ENCODE measurements at regions of chr10 and their contacts with region 1.

Region 1: DNA sequence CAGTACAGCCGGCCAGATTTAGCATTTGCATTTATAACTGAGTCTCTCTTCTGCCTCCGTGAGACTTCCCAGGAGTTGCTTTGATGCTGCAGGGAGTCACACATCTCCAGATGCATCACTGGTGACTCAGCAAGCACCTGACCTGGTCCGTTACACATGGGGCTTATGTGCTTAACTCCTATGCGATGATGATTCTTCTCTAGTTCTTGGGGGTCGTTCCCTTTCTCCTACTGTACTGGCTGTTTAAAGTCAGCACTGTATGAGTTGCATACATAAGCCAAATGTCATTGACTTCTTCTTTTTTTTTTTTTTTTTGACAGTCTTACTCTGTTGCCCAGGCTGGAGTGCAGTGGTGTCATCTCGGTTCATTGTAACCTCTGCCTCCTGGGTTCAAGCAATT is 13.0 kb upstream of the AKR1E2 start:
- DNase-seq: no peak
- ATAC-seq: peak; percentile 35
- H3K4me3 ChIP-seq: no peak overlapping the region
- H3K4me3 Mint-ChIP-seq: no peak overlapping the region
- H3K27ac ChIP-seq: no peak overlapping the region
- H3K27ac Mint-ChIP-seq: no peak overlapping the region
- H3K4me1 ChIP-seq: no peaks in the 10 kb centered on the region
- H3K4me1 Mint-ChIP-seq: peaks cover 0 to 4% (median 0%) of the 10 kb centered on the region in 7 donors
- H3K27me3 ChIP-seq: no peaks in the 10 kb centered on the region
- H3K27me3 Mint-ChIP-seq: peaks cover 0 to 14% (median 8%) of the 10 kb centered on the region in 5 donors

Region 2: GRCh38 chr10:4825851-4826665 is 13.0 kb after region 1 on chr10 and contains the start of gene AKR1E2:
- CTCF ChIA-PET with region 1: interaction called, 4 read pairs
- POLR2A ChIA-PET with region 1: interaction called, 3 read pairs
- intact Hi-C with region 1: loop called in 1 of 2 experiments (anchors 1 kb)
- DNase-seq: peak; percentile 56 to 91 (median 83)
- ATAC-seq: peak; percentile 93
- H3K4me3 ChIP-seq: peak within 1 kb of the TSS; percentile 10
- H3K4me3 Mint-ChIP-seq: peak within 1 kb of the TSS; percentile 61 to 89 (median 84)
- H3K27ac ChIP-seq: peak within 1 kb of the TSS; percentile 72
- H3K27ac Mint-ChIP-seq: peak within 1 kb of the TSS; percentile 12 to 94 (median 85)
- H3K4me1 ChIP-seq: peaks cover 2 to 6% of the 10 kb centered on the region in 2 donors
- H3K4me1 Mint-ChIP-seq: peaks cover 9 to 43% (median 29%) of the 10 kb centered on the region in 7 donors
- H3K27me3 ChIP-seq: peaks cover 0 to 3% of the 10 kb centered on the region in 2 donors
- H3K27me3 Mint-ChIP-seq: peaks cover 0 to 56% (median 31%) of the 10 kb centered on the region in 5 donors
- total RNA-seq, gene AKR1E2: 8.6 to 26.0 (median 25.1) TPM

Region 3: DNA sequence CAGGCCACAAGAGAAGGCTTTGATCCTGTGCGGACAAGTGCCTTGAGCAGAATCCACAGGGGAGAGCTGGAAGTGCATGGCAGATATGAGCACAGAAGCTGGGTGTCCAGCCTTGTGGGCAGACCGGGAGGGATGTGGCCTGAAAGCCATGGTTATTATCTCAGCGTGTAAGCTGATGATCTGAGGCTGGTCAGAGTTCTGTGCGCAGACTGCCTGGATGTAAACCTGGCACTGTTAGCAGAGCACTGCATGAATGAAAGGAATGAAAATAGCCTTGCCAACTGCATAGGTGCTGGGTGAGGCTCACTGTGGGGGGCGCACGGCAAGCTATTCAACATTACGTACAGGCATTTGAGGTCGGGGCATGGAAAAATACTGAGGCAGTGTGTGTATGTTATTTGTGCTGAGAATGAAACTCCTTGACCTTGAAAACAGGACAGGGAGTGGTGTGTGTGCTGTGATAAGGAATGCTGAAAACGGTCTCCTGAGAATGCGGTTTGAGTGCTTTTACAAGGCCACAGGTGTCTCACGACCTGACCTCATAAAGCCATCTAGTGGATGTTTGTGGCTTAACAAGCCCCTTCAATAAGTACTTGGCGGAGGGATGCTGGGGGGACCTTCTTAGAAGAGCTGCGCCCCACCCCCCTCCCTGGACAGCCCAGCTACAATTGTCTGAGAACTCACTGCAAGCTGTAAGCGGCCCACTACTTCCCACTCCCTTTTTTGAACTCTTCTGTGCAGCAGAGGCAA is 168.9 kb after region 1 on chr10:
- CTCF ChIA-PET with region 1: interaction called, 15 read pairs
- POLR2A ChIA-PET with region 1: no interaction called
- intact Hi-C with region 1: loop called (anchors 1 to 5 kb)
- DNase-seq: peak in 2 of 9 donors; percentile 3 to 18
- ATAC-seq: no peak
- H3K4me3 ChIP-seq: no peak overlapping the region
- H3K4me3 Mint-ChIP-seq: no peak overlapping the region
- H3K27ac ChIP-seq: no peak overlapping the region
- H3K27ac Mint-ChIP-seq: peak overlapping the region in 1 of 9 donors; percentile 67
- H3K4me1 ChIP-seq: no peaks in the 10 kb centered on the region
- H3K4me1 Mint-ChIP-seq: peaks cover 0 to 9% (median 0%) of the 10 kb centered on the region in 7 donors
- H3K27me3 ChIP-seq: no peaks in the 10 kb centered on the region
- H3K27me3 Mint-ChIP-seq: peaks cover 0 to 5% (median 0%) of the 10 kb centered on the region in 5 donors

Region 4: DNA sequence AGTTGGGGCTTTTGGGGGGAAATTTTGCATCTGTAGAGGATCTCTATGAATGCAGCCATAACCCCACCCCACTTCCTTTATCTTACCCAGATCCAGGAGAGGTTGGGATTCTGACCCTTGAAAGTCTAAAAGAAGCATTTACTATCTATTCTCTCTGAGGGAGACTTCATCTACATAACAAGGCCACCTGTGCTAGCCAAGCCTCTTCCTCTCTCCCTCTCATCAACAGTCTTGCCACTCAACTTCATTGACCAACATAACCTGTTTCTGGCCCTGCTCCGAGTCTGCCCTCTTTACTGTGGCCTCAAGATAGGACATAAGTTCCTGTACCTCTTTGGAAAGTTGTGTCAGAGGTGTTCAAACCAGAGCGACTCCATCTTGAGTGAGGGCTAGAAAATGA is 572.2 kb after region 1 on chr10:
- CTCF ChIA-PET with region 1: interaction called, 4 read pairs
- POLR2A ChIA-PET with region 1: no interaction called
- intact Hi-C with region 1: loop called (anchors 1 kb)
- DNase-seq: no peak
- ATAC-seq: no peak
- H3K4me3 ChIP-seq: no peak overlapping the region
- H3K4me3 Mint-ChIP-seq: peak overlapping the region in 1 of 10 donors; percentile 13
- H3K27ac ChIP-seq: no peak overlapping the region
- H3K27ac Mint-ChIP-seq: no peak overlapping the region
- H3K4me1 ChIP-seq: no peaks in the 10 kb centered on the region
- H3K4me1 Mint-ChIP-seq: peaks cover 0 to 5% (median 0%) of the 10 kb centered on the region in 7 donors
- H3K27me3 ChIP-seq: no peaks in the 10 kb centered on the region
- H3K27me3 Mint-ChIP-seq: peaks cover 0 to 15% (median 5%) of the 10 kb centered on the region in 5 donors

Region 5: DNA sequence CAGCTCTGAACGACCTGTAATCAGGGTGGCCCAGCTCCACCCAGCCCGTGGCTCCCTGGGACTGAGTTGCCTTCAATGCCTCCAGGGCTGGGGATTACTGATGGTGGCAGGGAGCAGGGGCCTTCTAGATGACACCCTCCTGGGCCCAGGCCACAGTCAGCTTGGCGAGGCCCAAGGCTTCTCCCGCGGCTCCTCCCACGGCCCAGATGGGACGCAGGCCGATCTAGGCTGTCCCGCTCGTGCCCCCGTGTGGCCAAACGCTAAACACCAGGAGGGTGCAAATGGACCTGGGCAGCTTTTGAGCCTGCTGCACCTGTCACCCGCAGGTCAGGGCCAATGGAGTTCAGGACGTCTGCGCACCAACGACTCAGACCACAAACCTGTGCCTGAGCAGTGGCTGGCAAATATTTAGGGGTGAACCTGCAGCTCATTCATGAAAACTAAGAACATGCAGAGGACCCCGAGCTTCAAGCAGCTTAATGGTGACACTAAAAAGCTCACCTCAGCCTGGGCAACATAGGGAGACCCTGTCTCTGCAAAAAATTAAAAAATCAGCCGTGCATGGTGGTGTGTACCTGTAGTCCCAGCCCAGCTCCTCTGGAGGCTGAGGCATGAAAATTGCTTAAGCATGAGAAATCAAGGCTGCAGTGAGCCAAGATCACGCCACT is 810.2 kb after region 1 on chr10:
- CTCF ChIA-PET with region 1: interaction called, 3 read pairs
- POLR2A ChIA-PET with region 1: no interaction called
- intact Hi-C with region 1: loop called in 1 of 2 experiments (anchors 10 kb)
- DNase-seq: peak; percentile 62 to 82 (median 70)
- ATAC-seq: peak; percentile 96
- H3K4me3 ChIP-seq: no peak overlapping the region
- H3K4me3 Mint-ChIP-seq: peak overlapping the region in 1 of 10 donors; percentile 32
- H3K27ac ChIP-seq: no peak overlapping the region
- H3K27ac Mint-ChIP-seq: peak overlapping the region in 1 of 9 donors; percentile 41
- H3K4me1 ChIP-seq: no peaks in the 10 kb centered on the region
- H3K4me1 Mint-ChIP-seq: peaks cover 0 to 4% (median 0%) of the 10 kb centered on the region in 7 donors
- H3K27me3 ChIP-seq: no peaks in the 10 kb centered on the region
- H3K27me3 Mint-ChIP-seq: peaks cover 0 to 4% (median 0%) of the 10 kb centered on the region in 5 donors

Measured in naive thymus-derived CD4-positive, alpha-beta T cell (primary cell).